ENCODE measurements at regions of chr12 and their contacts with region 1.

Region 1: GRCh38 chr12:59808317-59808910 is 212.6 kb downstream of the SLC16A7 start:
- DNase-seq: no peak
- H3K4me3 ChIP-seq: no peak overlapping the region
- H3K27ac ChIP-seq: no peak overlapping the region
- H3K4me1 ChIP-seq: no peaks in the 10 kb centered on the region
- H3K27me3 ChIP-seq: no peaks in the 10 kb centered on the region
- CTCF ChIP-seq: peak in 2 of 3 experiments; percentile 54 to 61; a peak in 3 of 4 replicates
- EP300 ChIP-seq: no peak
- POLR2A ChIP-seq: no peak
- RAD21 ChIP-seq: peak; percentile 53 to 58

Region 2: DNA sequence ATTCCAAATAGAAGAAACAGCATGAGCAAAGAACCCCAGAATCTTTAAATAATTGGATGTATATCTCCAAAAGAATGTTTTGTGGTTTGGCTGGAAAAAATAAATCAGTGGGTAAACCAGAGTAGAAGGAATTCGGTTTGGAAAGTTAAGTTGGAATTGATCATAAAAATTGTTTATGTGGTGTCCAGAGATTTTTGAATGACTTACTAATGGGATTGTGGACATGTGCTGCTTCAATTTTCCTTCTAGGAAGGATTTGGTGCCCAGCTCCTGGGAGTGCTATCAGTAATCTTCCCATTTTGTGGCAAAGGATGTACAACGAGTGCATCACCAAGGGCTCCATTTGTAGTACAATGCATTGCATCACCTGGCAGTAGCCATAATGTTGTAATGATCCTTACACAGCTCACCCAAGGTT is 12.2 kb after region 1 on chr12:
- CTCF ChIA-PET with region 1: interaction called, 19 read pairs
- POLR2A ChIA-PET with region 1: no interaction called
- DNase-seq: no peak
- H3K4me3 ChIP-seq: no peak overlapping the region
- H3K27ac ChIP-seq: no peak overlapping the region
- H3K4me1 ChIP-seq: no peaks in the 10 kb centered on the region
- H3K27me3 ChIP-seq: no peaks in the 10 kb centered on the region
- CTCF ChIP-seq: no peak
- EP300 ChIP-seq: no peak
- POLR2A ChIP-seq: no peak
- RAD21 ChIP-seq: no peak

Region 3: GRCh38 chr12:59843313-59843712 is 34.9 kb after region 1 on chr12:
- CTCF ChIA-PET with region 1: interaction called, 13 read pairs
- POLR2A ChIA-PET with region 1: no interaction called
- DNase-seq: no peak
- H3K4me3 ChIP-seq: no peak overlapping the region
- H3K27ac ChIP-seq: no peak overlapping the region
- H3K4me1 ChIP-seq: peaks cover 0 to 2% (median 0%) of the 10 kb centered on the region in 4 experiments; a peak in 1 of 7 replicates
- H3K27me3 ChIP-seq: no peaks in the 10 kb centered on the region
- CTCF ChIP-seq: no peak
- EP300 ChIP-seq: no peak
- POLR2A ChIP-seq: no peak
- RAD21 ChIP-seq: peak; percentile 11 to 32; a peak in 3 of 4 replicates

Measured in H1 (cell line).